Calu3 (cell line): ENCODE measurements at regions of chr21 and their contacts with region 1.

Region 1: GRCh38 chr21:34545079-34545884 is 33.3 kb upstream of the KCNE1 start:
- DNase-seq: peak; percentile 77
- H3K4me3 Mint-ChIP-seq: peak overlapping the region; percentile 43
- H3K27ac Mint-ChIP-seq: peak overlapping the region; percentile 85
- H3K4me1 Mint-ChIP-seq: peaks cover 46% of the 10 kb centered on the region
- H3K27me3 Mint-ChIP-seq: no peaks in the 10 kb centered on the region
- CTCF ChIP-seq: no peak

Region 2: DNA sequence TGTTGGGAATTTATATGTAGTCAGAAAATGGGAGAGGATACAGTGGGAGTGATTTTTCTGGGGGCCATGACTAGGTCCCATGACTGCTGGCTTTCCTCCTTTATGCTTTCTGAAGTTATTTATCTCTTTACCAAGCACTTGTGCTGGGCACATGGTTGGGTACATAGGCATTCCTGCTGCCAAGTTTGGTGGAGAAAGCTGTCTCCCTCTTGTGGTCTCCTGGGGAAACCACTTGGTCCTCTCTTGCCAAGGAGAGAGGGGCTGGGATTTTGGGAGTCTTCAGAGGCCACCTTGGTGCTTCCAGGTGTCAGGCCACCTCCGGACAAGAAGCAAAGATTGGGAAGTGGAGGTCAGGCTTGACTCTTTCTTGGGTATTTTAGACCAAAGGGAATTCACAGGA is 301.7 kb before region 1 on chr21:
- CTCF ChIA-PET with region 1: interaction called, 10 read pairs
- intact Hi-C with region 1: no loop called
- DNase-seq: peak; percentile 8
- H3K4me3 Mint-ChIP-seq: no peak overlapping the region
- H3K27ac Mint-ChIP-seq: no peak overlapping the region
- H3K4me1 Mint-ChIP-seq: no peaks in the 10 kb centered on the region
- H3K27me3 Mint-ChIP-seq: no peaks in the 10 kb centered on the region
- CTCF ChIP-seq: no peak

Region 3: DNA sequence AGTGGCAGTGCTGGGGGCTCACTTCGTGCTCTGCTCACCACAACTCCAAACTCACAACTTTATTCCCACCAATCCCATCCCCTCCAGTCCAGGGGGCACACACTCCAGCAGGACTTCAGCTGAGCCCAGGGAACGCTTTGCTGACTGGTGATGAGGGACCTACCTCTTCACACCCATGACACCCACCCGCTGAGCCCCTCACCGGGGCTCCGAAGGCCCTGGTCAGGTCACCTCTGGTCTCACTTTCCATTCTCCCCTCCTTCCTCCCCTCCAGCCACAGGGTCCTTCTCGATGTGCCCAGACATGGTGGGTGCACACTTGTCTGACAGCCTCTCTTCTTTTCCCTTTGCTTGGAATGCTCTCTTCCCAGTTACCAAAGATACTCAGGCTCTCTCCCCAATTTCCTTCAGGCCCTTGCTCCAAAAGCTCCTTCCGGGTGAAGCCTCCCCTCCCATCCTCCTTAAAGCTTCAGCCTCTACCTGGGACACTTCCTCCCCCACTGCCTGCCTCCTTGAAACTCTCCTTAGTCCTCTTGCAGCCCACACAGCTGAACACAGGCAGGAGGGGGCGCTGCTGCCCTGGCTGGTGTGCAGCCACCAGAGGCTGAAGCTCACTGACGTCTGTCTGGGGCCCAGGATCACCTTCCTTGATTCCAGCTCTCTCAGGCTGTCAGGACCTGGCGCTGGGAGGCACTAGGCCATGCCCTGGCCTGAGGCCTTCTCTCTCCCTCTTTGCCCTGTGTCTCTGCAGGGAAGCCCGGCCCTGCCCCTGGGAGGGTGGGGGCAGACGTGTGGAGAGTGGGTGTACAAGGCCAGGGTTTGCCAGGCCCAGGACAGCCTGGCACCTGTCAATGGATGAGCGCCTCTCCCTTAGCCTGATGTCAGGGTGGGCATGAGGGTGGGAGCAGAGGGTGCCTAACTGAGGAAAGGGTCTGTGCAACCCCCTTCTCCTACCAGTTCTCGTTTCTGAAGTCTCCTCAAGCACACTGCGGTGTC is 34.8 kb before region 1 on chr21:
- CTCF ChIA-PET with region 1: interaction called, 12 read pairs
- intact Hi-C with region 1: no loop called
- DNase-seq: peak; percentile 81
- H3K4me3 Mint-ChIP-seq: no peak overlapping the region
- H3K27ac Mint-ChIP-seq: no peak overlapping the region
- H3K4me1 Mint-ChIP-seq: peaks cover 7% of the 10 kb centered on the region
- H3K27me3 Mint-ChIP-seq: peaks cover 12% of the 10 kb centered on the region
- CTCF ChIP-seq: peak; percentile 49

Region 4: GRCh38 chr21:34526618-34527290 is 18.5 kb before region 1 on chr21:
- CTCF ChIA-PET with region 1: interaction called, 24 read pairs
- intact Hi-C with region 1: loop called (anchors 2 kb)
- DNase-seq: peak; percentile 71
- H3K4me3 Mint-ChIP-seq: peak overlapping the region; percentile 74
- H3K27ac Mint-ChIP-seq: peak overlapping the region; percentile 78
- H3K4me1 Mint-ChIP-seq: peaks cover 20% of the 10 kb centered on the region
- H3K27me3 Mint-ChIP-seq: no peaks in the 10 kb centered on the region
- CTCF ChIP-seq: no peak

Region 5: DNA sequence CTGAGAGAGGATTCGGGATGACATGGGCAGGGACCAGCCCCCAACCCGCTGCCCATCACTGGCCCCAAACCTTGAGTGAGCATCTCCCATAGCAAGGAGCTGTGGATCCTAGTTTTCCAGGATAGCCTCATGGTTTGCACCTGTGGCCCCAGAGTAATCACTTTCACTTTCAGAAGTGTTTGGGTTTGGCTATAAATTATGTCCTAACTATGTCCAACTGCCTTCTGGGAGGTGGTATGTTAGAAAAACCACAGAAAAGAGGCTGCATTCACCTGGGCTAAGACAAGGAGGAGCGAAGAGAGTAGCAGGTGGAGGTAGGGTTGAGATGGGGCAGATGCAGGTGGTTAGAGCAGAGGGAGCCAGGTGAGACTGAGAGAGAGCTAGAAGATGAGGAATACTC is 104.1 kb after region 1 on chr21:
- CTCF ChIA-PET with region 1: no interaction called
- intact Hi-C with region 1: no loop called
- DNase-seq: no peak
- H3K4me3 Mint-ChIP-seq: no peak overlapping the region
- H3K27ac Mint-ChIP-seq: no peak overlapping the region
- H3K4me1 Mint-ChIP-seq: peaks cover 14% of the 10 kb centered on the region
- H3K27me3 Mint-ChIP-seq: peaks cover 13% of the 10 kb centered on the region
- CTCF ChIP-seq: no peak

Region 6: DNA sequence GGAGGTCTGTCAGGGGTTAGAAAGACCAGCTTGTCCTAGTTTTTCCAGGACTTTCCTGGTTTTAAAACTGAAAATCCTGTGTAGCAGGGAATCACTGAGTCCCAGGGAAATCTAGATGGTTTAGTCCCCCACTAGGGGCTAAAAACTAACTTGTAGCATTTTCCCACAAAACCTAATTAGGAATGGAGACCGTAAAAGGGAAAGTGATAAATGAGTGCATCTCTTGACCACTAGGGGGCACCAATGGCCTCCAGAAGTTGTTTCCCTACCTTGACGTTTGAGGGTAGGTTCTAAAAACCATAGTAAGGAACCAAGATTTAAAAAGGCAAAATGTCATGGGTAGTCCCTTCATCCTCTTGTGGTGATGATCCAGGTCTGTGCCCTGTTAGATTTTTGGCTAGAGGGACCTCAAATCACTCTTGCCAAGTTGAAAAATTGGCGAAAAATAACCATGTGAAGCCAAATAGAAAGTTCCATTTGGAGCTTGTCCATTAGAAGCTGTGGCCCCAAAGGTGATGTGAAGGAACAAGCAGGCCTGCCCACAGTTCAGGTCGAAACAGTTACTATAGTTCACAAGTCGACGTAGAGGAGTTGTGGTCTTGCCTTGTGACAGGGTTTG is 148.0 kb after region 1 on chr21:
- CTCF ChIA-PET with region 1: no interaction called
- intact Hi-C with region 1: no loop called
- DNase-seq: peak; percentile 49
- H3K4me3 Mint-ChIP-seq: no peak overlapping the region
- H3K27ac Mint-ChIP-seq: no peak overlapping the region
- H3K4me1 Mint-ChIP-seq: peaks cover 19% of the 10 kb centered on the region
- H3K27me3 Mint-ChIP-seq: no peaks in the 10 kb centered on the region
- CTCF ChIP-seq: peak; percentile 45